ENCODE measurements at regions of chr9 and their contacts with region 1.

Region 1: GRCh38 chr9:34211395-34211794 is 32.6 kb downstream of the UBAP1 start:
- DNase-seq: no peak
- ATAC-seq: peak; percentile 82
- H3K4me3 ChIP-seq: no peak overlapping the region
- H3K27ac ChIP-seq: no peak overlapping the region
- H3K4me1 ChIP-seq: peaks cover 5% of the 10 kb centered on the region
- H3K27me3 ChIP-seq: no peaks in the 10 kb centered on the region
- CTCF ChIP-seq: no peak
- EP300 ChIP-seq: no peak
- POLR2A ChIP-seq: no peak
- RAD21 ChIP-seq: no peak

Region 2: DNA sequence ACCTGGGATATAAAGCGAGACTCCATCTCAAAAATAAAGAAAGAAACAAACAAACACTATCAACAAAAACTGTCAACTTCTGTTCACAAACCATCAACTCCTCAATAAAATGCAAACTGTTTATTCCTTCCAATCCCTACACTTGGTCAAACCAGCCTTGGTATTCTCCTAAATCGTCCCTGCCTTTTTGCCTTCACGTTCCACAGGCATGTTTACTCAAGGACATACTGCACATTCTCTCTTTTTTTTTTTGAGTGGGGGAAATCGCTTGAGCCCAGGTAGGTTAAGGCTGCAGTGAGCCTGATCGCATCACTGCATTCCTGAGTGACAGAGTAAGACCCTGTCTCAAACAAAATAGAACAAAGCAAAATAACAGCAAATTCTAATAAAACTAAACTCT is 175.7 kb before region 1 on chr9:
- CTCF ChIA-PET with region 1: no interaction called
- POLR2A ChIA-PET with region 1: no interaction called
- RAD21 ChIA-PET with region 1: no interaction called
- SMC1A ChIA-PET with region 1: no interaction called
- in situ Hi-C with region 1: no loop called
- intact Hi-C with region 1: no loop called
- DNase-seq: no peak
- ATAC-seq: no peak
- H3K4me3 ChIP-seq: no peak overlapping the region
- H3K27ac ChIP-seq: no peak overlapping the region
- H3K4me1 ChIP-seq: no peaks in the 10 kb centered on the region
- H3K27me3 ChIP-seq: no peaks in the 10 kb centered on the region
- CTCF ChIP-seq: no peak
- EP300 ChIP-seq: no peak
- POLR2A ChIP-seq: no peak
- RAD21 ChIP-seq: no peak

Region 3: DNA sequence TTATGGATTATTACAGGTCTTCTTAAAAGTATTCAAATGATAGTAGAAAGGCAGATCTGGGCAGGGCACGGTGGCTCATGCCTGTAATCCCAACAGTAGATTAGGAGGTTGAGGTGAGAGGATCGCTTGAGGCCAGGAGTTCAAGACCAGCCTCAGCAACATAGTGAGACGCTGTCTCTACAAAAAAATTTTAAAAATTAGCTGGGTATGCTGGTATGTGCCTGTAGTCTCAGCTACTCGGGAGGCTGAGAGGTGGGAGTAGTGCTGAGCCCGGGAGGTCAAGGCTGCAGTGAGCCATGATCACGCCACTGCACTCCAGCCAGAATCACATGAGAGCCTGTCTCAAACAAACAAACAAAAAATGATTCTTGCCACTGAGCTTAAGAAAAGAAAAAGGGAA is 11.1 kb after region 1 on chr9:
- CTCF ChIA-PET with region 1: interaction called, 4 read pairs
- POLR2A ChIA-PET with region 1: no interaction called
- RAD21 ChIA-PET with region 1: no interaction called
- SMC1A ChIA-PET with region 1: interaction called, 12 read pairs
- in situ Hi-C with region 1: no loop called
- intact Hi-C with region 1: no loop called
- DNase-seq: no peak
- ATAC-seq: no peak
- H3K4me3 ChIP-seq: no peak overlapping the region
- H3K27ac ChIP-seq: no peak overlapping the region
- H3K4me1 ChIP-seq: no peaks in the 10 kb centered on the region
- H3K27me3 ChIP-seq: no peaks in the 10 kb centered on the region
- CTCF ChIP-seq: no peak
- EP300 ChIP-seq: no peak
- POLR2A ChIP-seq: no peak
- RAD21 ChIP-seq: no peak

Region 4: GRCh38 chr9:34337404-34337803 is 126.0 kb after region 1 on chr9:
- CTCF ChIA-PET with region 1: no interaction called
- POLR2A ChIA-PET with region 1: no interaction called
- RAD21 ChIA-PET with region 1: no interaction called
- SMC1A ChIA-PET with region 1: no interaction called
- in situ Hi-C with region 1: no loop called
- intact Hi-C with region 1: no loop called
- DNase-seq: no peak
- ATAC-seq: no peak
- H3K4me3 ChIP-seq: no peak overlapping the region
- H3K27ac ChIP-seq: no peak overlapping the region
- H3K4me1 ChIP-seq: no peaks in the 10 kb centered on the region
- H3K27me3 ChIP-seq: no peaks in the 10 kb centered on the region
- CTCF ChIP-seq: no peak; a peak in 1 of 6 replicates
- EP300 ChIP-seq: no peak
- POLR2A ChIP-seq: no peak
- RAD21 ChIP-seq: 0 out of 2 replicates have a peak, but pooled peaks have one; percentile 11